MCF 10A (cell line): ENCODE measurements at regions of chr1 and their contacts with region 1.

Region 1: GRCh38 chr1:205658943-205659581 is 21.2 kb downstream of the SLC45A3 start:
- DNase-seq: peak; percentile 90
- H3K4me3 Mint-ChIP-seq: no peak overlapping the region
- H3K27ac Mint-ChIP-seq: no peak overlapping the region
- H3K4me1 Mint-ChIP-seq: peaks cover 1% of the 10 kb centered on the region
- H3K27me3 Mint-ChIP-seq: no peaks in the 10 kb centered on the region
- CTCF ChIP-seq: peak; percentile 99

Region 2: GRCh38 chr1:205493241-205494085 is 165.6 kb before region 1 on chr1:
- CTCF ChIA-PET with region 1: interaction called, 109 read pairs
- POLR2A ChIA-PET with region 1: no interaction called
- intact Hi-C with region 1: loop called (anchors 1 kb)
- DNase-seq: peak; percentile 99
- H3K4me3 Mint-ChIP-seq: peak overlapping the region; percentile 53
- H3K27ac Mint-ChIP-seq: peak overlapping the region; percentile 86
- H3K4me1 Mint-ChIP-seq: peaks cover 38% of the 10 kb centered on the region
- H3K27me3 Mint-ChIP-seq: no peaks in the 10 kb centered on the region
- CTCF ChIP-seq: no peak

Region 3: DNA sequence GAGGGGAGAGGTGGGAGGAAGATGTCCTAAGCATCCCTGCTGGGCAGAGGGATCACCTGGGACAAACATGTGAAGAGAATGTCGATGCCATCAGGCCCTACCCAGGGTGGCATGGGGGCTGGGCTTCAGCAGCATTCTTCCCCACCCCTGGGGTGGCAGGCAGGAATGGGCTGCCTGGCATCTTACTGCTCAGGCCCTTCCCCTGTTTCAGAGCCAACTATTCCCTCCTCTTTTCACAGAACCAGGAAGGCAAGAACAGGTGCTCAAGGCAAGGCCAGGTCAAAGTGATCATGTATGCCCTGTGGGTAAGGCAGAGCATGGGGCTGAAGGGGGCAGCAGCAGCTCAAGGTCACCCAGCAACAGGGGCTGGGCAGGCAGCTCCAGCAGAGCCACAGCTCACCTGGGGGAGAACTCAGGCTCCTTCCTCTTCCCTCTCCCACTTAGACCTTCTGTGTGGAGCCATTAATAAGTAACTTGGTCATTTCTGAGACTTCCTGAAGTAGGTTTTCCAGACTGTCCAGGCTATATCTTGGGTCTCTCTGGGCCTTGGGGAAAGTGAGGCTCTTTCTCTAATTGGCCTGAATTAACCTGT is 83.7 kb before region 1 on chr1:
- CTCF ChIA-PET with region 1: interaction called, 918 read pairs
- POLR2A ChIA-PET with region 1: interaction called, 3 read pairs
- intact Hi-C with region 1: no loop called
- DNase-seq: no peak
- H3K4me3 Mint-ChIP-seq: no peak overlapping the region
- H3K27ac Mint-ChIP-seq: no peak overlapping the region
- H3K4me1 Mint-ChIP-seq: peaks cover 6% of the 10 kb centered on the region
- H3K27me3 Mint-ChIP-seq: peaks cover 90% of the 10 kb centered on the region
- CTCF ChIP-seq: no peak

Region 4: DNA sequence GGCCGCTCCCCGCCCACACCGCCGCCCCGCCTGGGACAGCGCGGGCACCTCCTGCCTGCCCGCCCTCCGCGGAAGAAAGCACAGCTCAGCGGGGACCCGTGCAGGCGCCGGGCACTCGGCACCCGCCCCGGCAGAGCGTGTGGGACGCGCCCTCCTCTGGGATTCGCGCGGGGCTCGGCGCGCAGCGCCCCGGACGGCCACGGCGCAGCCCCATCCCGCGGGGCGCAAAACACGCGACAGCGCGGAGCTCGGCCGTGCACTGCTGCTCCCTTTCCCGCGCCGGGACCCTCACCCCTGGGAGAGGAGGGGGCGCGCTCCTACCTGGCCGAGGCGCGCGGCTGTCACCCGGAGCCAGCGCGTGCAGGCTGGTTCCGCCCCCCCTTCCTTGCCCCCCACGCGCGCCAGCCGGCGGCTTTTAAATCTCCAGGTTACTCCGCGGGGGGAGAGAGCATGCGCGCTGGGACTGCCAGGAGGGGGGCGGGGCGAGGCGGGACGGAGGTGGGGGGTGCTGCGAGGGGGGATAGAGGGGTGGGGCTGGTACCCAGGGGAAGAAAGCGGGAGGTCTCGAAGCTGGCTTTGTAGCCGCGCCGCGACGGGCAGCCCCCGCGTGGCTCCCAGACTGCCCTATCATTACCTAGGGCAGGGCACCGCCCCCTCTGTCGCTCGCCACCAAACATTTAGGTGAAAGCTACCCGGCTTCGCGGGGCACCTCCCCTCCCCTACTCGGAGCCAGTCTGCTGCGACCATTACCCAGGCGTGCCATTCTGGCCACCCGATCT is 21.2 kb after region 1 on chr1 and contains the start of gene SLC45A3:
- CTCF ChIA-PET with region 1: interaction called, 130 read pairs
- POLR2A ChIA-PET with region 1: interaction called, 6 read pairs
- intact Hi-C with region 1: no loop called
- DNase-seq: no peak
- H3K4me3 Mint-ChIP-seq: peak within 1 kb of the TSS; percentile 76
- H3K27ac Mint-ChIP-seq: peak within 1 kb of the TSS; percentile 5
- H3K4me1 Mint-ChIP-seq: peaks cover 14% of the 10 kb centered on the region
- H3K27me3 Mint-ChIP-seq: no peaks in the 10 kb centered on the region
- CTCF ChIP-seq: no peak
- total RNA-seq, gene SLC45A3: 3.1 and 5.3 TPM in 2 replicates

Region 5: DNA sequence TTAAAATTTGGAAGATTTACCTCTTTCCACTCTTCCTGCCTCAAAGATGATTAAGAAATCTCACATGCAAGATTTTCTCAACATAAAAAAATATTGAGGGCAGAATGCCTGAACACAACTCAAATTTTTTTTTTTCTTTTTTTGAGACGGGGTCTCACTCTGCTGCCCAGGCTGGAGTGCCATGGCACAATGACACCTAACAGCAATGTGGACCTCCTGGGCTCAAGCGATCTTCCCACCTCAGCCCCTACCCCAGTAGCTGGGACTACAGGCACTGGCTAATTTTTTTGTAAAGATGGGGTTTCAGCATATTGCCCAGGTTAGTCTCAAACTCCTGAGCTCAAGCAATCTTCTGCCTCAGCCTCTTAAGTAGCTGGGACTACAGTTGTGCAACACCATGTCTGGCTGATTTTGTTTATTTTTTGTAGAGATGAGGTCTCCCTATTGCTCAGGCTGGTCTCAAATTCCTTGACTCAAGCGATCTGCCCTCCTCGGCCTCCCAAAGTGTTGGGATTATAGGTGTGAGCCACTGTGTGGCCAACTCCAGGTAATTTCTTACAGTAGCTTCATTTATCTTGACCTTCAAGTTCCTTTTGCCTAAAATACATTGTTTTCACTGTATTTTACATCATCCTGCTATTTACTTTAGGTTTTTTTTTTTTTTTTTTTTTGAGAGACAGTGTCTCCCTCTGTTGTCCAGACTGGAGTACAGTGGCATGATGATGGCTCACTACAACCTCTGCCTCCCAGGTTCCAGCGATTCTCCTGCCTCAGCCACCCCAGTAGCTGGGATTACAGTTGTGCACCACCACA is 80.5 kb after region 1 on chr1:
- CTCF ChIA-PET with region 1: interaction called, 34 read pairs
- POLR2A ChIA-PET with region 1: interaction called, 11 read pairs
- intact Hi-C with region 1: no loop called
- DNase-seq: peak; percentile 85
- H3K4me3 Mint-ChIP-seq: no peak overlapping the region
- H3K27ac Mint-ChIP-seq: peak overlapping the region; percentile 3
- H3K4me1 Mint-ChIP-seq: peaks cover 23% of the 10 kb centered on the region
- H3K27me3 Mint-ChIP-seq: no peaks in the 10 kb centered on the region
- CTCF ChIP-seq: peak; percentile 48

Region 6: DNA sequence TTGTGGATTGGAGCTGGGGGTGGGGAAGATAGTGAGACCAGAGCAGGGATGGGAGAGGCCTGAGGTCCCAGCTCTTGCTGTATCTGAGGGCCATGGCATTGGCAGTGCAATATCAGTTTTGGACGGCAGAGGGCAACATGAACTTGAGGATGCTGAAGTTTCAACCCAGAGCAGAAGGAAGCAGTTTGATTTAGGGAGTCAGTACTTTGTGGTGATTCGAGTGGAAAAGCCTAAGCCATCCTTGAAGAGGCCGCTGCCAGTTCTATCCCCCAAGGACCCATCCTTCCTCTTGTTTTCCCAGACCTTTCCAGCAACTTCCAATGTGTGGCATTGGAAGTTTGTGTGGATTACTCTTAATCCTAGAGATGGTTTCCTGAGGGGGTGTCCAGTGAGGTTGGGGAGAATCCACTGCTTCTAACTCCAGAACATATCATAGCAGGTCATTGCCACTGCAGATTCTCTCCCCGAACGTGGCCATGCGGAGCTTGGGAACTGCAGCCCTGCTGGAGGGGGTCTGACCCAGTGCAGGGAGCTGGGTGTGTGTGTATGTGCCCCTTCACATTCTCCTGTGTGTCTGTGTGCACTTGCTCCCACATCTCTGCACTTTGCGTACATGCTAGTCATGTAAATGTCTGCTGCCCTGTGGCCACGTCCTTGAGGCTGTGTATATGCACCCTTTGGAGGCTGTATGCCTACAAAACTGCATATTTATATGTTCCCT is 260.1 kb after region 1 on chr1:
- CTCF ChIA-PET with region 1: interaction called, 29 read pairs
- POLR2A ChIA-PET with region 1: no interaction called
- intact Hi-C with region 1: no loop called
- DNase-seq: peak; percentile 95
- H3K4me3 Mint-ChIP-seq: no peak overlapping the region
- H3K27ac Mint-ChIP-seq: no peak overlapping the region
- H3K4me1 Mint-ChIP-seq: peaks cover 8% of the 10 kb centered on the region
- H3K27me3 Mint-ChIP-seq: peaks cover 27% of the 10 kb centered on the region
- CTCF ChIP-seq: peak; percentile 100